ENCODE measurements at regions of chr2 and their contacts with region 1.

Region 1: DNA sequence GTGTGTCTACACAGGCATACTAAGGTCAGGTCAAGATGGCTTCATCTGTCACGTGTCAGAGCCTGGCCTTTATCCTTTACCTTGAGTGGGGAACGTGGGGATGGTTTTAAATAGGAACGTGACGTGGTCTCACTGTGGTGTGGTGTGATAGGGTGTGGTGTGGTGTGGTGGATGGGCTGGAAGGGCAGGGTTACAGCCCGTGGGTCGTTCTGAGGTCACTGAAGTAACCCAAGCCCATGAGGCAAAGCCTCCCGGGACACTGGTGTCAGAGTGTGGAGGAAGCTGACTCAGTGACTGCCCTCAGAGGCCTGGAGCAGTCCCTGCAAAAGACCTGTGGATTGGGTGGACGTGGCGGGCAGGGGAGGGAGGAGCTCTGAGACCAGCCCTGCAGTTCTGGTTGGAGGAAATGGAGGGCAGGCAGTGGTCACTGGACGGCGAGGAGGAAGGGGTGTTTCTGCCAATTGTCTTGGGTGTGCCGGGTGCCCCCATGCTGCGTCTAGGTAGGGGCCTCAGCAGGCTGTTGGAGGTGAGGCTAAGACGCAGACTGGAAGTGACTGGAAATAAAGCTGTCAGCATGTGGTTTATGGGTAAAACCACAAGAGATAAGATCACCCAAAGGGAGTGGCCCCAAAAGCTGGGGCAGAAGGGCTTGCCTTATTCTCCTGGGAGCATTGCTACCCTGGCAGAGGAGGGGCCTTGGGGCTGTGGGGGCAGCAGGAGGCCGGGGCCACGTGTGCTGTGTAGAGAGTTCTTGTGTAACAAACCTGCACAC is 84.8 kb downstream of the SH3RF3 start:
- DNase-seq: peak; percentile 96 to 98 (median 97)
- H3K4me3 ChIP-seq: peak overlapping the region in 1 of 3 experiments; percentile 38
- H3K4me3 Mint-ChIP-seq: peak overlapping the region; percentile 67 to 86
- H3K27ac ChIP-seq: peak overlapping the region; percentile 67 to 89
- H3K27ac Mint-ChIP-seq: peak overlapping the region; percentile 94 to 99 (median 96)
- H3K4me1 ChIP-seq: peaks cover 78 to 87% of the 10 kb centered on the region in 2 donors
- H3K4me1 Mint-ChIP-seq: peaks cover 88% of the 10 kb centered on the region
- H3K27me3 ChIP-seq: no peaks in the 10 kb centered on the region
- H3K27me3 Mint-ChIP-seq: peaks cover 13 to 18% (median 16%) of the 10 kb centered on the region in 3 donors
- CTCF ChIP-seq: no peak

Region 2: GRCh38 chr2:109254174-109254904 is 40.5 kb after region 1 on chr2:
- intact Hi-C with region 1: loop called (anchors 5 to 10 kb)
- DNase-seq: peak; percentile 62 to 70 (median 63)
- H3K4me3 ChIP-seq: no peak overlapping the region
- H3K4me3 Mint-ChIP-seq: peak overlapping the region; percentile 24 to 64
- H3K27ac ChIP-seq: peak overlapping the region in 1 of 2 donors; percentile 88
- H3K27ac Mint-ChIP-seq: peak overlapping the region; percentile 52 to 95 (median 88)
- H3K4me1 ChIP-seq: peaks cover 44 to 45% of the 10 kb centered on the region in 2 donors
- H3K4me1 Mint-ChIP-seq: peaks cover 48% of the 10 kb centered on the region
- H3K27me3 ChIP-seq: no peaks in the 10 kb centered on the region
- H3K27me3 Mint-ChIP-seq: peaks cover 4 to 6% (median 5%) of the 10 kb centered on the region in 3 donors
- CTCF ChIP-seq: no peak

Region 3: GRCh38 chr2:109275120-109276012 is 61.5 kb after region 1 on chr2:
- intact Hi-C with region 1: loop called in 1 of 2 experiments (anchors 10 kb)
- DNase-seq: peak; percentile 67 to 70 (median 68)
- H3K4me3 ChIP-seq: no peak overlapping the region
- H3K4me3 Mint-ChIP-seq: peak overlapping the region in 1 of 2 donors; percentile 68
- H3K27ac ChIP-seq: peak overlapping the region; percentile 24 to 27
- H3K27ac Mint-ChIP-seq: peak overlapping the region in 6 of 7 donors; percentile 53 to 88 (median 63)
- H3K4me1 ChIP-seq: peaks cover 9 to 17% of the 10 kb centered on the region in 2 donors
- H3K4me1 Mint-ChIP-seq: peaks cover 19% of the 10 kb centered on the region
- H3K27me3 ChIP-seq: no peaks in the 10 kb centered on the region
- H3K27me3 Mint-ChIP-seq: peaks cover 0 to 6% (median 3%) of the 10 kb centered on the region in 3 donors
- CTCF ChIP-seq: no peak

Region 4: DNA sequence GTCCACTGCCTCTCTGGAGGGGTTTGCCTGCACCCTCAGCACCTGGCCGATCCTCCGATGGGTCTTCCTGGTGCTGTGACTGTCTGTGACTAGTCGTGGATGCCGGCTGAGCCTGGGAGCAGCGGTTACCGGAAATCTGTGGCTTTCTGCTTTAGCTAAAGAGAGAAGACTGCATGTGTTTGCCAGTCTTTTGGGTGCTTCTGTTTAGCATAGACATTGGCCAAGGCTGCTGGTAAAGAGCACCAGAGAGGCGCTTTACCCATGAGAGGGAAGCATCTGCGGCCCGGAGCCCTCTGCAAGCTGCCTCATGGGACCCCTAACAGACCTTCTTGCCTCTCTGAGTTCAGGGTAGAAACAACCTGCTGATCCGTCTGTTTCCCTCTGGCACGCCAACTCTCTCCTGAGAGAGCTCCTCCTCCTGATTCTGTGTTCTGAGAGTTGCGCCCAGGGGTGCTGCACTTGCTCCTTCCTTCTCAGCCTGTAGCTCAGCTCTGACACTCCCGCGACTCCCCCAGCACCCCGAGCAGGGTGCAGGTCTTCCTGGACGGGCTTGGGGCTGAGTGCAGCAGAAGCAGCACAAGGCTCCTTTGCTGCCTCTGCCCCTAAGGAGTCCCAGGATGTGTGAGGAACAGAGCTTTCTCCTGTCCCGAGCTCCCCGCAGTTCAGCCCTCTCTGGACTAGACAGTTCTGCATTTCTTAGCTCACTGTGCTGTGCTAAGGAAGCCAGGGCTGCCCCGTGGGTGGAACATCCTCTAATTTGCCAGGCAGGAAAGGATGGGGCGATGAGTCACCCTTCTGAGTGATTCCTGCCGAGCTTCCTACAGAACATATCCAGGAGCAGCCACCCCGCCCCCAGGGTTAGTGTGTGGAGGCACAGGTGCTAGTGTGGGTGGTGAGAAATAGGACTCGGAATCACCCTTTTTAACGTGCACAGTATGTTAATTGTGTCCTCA is 118.3 kb after region 1 on chr2:
- intact Hi-C with region 1: loop called in 1 of 2 experiments (anchors 5 kb)
- DNase-seq: peak; percentile 62 to 86 (median 80)
- H3K4me3 ChIP-seq: peak overlapping the region in 1 of 3 experiments; percentile 62
- H3K4me3 Mint-ChIP-seq: peak overlapping the region; percentile 69 to 87
- H3K27ac ChIP-seq: no peak overlapping the region
- H3K27ac Mint-ChIP-seq: peak overlapping the region in 6 of 7 donors; percentile 6 to 69 (median 58)
- H3K4me1 ChIP-seq: peaks cover 43 to 45% of the 10 kb centered on the region in 2 donors
- H3K4me1 Mint-ChIP-seq: peaks cover 47% of the 10 kb centered on the region
- H3K27me3 ChIP-seq: peaks cover 3 to 16% of the 10 kb centered on the region in 2 donors
- H3K27me3 Mint-ChIP-seq: peaks cover 33 to 44% (median 42%) of the 10 kb centered on the region in 3 donors
- CTCF ChIP-seq: no peak

Region 5: DNA sequence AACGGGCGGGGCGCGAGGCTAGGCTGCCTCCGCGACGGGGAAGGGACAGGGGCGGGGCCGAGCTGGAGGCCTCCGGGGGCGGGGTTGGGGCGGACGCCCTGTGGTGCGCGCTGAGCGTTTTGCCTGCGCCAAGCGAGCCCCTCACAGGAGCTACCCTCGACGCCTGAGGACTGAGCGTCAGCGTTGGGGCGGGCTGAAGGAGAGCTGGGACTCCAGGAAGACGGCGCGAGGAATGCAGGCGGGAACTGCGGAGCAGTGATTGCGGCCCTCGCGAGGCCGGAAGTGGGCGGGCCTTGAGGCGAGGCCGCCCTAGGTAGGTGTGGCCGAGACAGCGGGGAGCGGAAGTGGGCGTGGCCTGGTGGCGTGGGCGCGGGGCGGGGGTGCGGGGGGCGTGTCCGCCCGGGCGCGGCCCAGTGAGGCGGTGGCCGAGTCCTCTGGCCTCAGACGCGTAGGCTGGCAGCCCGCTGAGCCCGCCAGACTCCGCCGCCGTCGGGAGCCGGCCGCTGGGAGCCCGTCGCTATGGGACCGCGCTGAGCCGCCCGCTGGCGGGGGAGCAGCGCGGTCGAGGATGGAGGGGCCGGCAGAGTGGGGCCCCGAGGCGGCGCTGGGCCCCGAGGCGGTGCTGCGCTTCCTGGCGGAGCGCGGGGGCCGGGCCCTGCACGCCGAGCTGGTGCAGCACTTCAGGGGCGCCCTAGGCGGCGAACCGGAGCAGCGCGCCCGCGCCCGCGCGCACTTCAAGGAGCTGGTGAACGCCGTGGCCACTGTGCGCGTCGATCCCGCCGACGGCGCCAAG is 400.3 kb after region 1 on chr2 and contains the starts of genes SEPTIN10 and SOWAHC:
- intact Hi-C with region 1: loop called in 1 of 2 experiments (anchors 5 kb)
- DNase-seq: peak; percentile 85 to 91 (median 91)
- H3K4me3 ChIP-seq: peak within 1 kb of the TSS; percentile 38 to 78 (median 54)
- H3K4me3 Mint-ChIP-seq: peak within 1 kb of the TSS; percentile 89 to 93
- H3K27ac ChIP-seq: peak within 1 kb of the TSS; percentile 70
- H3K27ac Mint-ChIP-seq: peak within 1 kb of the TSS; percentile 89 to 96 (median 93)
- H3K4me1 ChIP-seq: peaks cover 24 to 38% of the 10 kb centered on the region in 2 donors
- H3K4me1 Mint-ChIP-seq: peaks cover 30% of the 10 kb centered on the region
- H3K27me3 ChIP-seq: peaks cover 74 to 86% of the 10 kb centered on the region in 2 donors
- H3K27me3 Mint-ChIP-seq: peaks cover 74 to 83% (median 75%) of the 10 kb centered on the region in 3 donors
- CTCF ChIP-seq: no peak
- polyA plus RNA-seq, gene SEPTIN10: 4.2 to 6.8 (median 4.4) TPM
- polyA plus RNA-seq, gene SOWAHC: 1.1 to 3.4 (median 2.7) TPM